ENCODE measurements at regions of chr1 and their contacts with region 1.

Region 1: GRCh38 chr1:228837817-228838716 is 102.8 kb downstream of the RHOU start:
- DNase-seq: peak in 2 of 5 donors; percentile 32 to 50
- ATAC-seq: peak; percentile 36 to 82 (median 78)
- H3K4me3 ChIP-seq: no peak overlapping the region
- H3K27ac ChIP-seq: peak overlapping the region in 8 of 12 donors; percentile 10 to 67 (median 45)
- H3K4me1 ChIP-seq: peaks cover 0 to 26% (median 11%) of the 10 kb centered on the region in 12 donors
- H3K27me3 ChIP-seq: peaks cover 0 to 23% (median 0%) of the 10 kb centered on the region in 9 donors
- CTCF ChIP-seq: no peak
- POLR2A ChIP-seq: no peak

Region 2: GRCh38 chr1:228898582-228898992 is 60.5 kb after region 1 on chr1:
- intact Hi-C with region 1: loop called in 1 of 10 experiments (anchors 10 kb)
- DNase-seq: no peak
- ATAC-seq: peak in 1 of 4 donors; percentile 46
- H3K4me3 ChIP-seq: no peak overlapping the region
- H3K27ac ChIP-seq: no peak overlapping the region
- H3K4me1 ChIP-seq: peaks cover 0 to 26% (median 5%) of the 10 kb centered on the region in 12 donors
- H3K27me3 ChIP-seq: peaks cover 0 to 14% (median 0%) of the 10 kb centered on the region in 9 donors
- CTCF ChIP-seq: no peak
- POLR2A ChIP-seq: no peak

Region 3: GRCh38 chr1:229607370-229607769 is 769.3 kb after region 1 on chr1:
- intact Hi-C with region 1: no loop called
- DNase-seq: no peak
- ATAC-seq: no peak
- H3K4me3 ChIP-seq: no peak overlapping the region
- H3K27ac ChIP-seq: no peak overlapping the region
- H3K4me1 ChIP-seq: peaks cover 0 to 6% (median 0%) of the 10 kb centered on the region in 12 donors
- H3K27me3 ChIP-seq: no peaks in the 10 kb centered on the region
- CTCF ChIP-seq: no peak
- POLR2A ChIP-seq: no peak